Vagina (tissue), 2 donors: ENCODE measurements at regions of chr6 and their contacts with region 1.

Region 1: DNA sequence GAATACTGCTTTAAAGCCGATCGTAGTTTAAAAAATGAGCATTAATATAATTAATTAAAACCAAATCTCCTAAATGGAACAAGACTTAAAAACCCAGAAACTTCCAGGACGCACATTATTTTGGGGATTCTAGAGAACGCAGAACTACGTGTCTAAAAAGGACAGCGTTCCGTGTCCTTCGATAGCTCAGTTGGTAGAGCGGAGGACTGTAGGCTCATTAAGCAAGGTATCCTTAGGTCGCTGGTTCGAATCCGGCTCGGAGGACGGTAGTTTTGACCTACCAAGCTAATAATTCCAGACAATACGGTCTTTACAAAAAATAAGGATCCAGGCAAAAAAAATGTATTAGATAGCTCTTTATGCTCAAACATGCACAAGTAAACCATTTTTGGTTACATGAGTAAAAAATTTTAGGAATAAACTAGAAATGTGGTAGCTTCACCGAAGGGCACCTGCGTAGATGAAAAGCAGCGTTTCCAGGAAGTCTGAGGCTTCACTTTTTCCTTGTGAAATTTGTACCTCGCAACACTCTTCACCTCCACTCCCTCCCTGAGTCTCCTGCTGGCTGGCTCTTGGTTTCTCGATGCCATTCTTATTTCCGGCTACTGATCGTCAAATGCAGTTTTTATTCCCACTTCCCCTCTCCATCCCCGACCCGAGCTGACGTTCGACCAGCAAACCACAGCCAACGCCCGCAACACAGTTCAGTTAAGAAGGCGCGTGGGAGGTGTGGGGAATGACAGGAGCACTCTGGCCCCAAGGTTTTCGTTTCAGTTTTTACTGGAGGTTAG is 19.6 kb upstream of the ABT1 start:
- DNase-seq: no peak
- H3K4me3 ChIP-seq: peak overlapping the region; percentile 12 to 16
- H3K27ac ChIP-seq: no peak overlapping the region
- H3K4me1 ChIP-seq: no peaks in the 10 kb centered on the region
- H3K27me3 ChIP-seq: no peaks in the 10 kb centered on the region
- CTCF ChIP-seq: no peak
- POLR2A ChIP-seq: no peak

Region 2: GRCh38 chr6:25309886-25310285 is 1267.2 kb before region 1 on chr6:
- intact Hi-C with region 1: loop called (anchors 5 kb)
- DNase-seq: no peak
- H3K4me3 ChIP-seq: no peak overlapping the region
- H3K27ac ChIP-seq: no peak overlapping the region
- H3K4me1 ChIP-seq: peaks cover 32% of the 10 kb centered on the region
- H3K27me3 ChIP-seq: no peaks in the 10 kb centered on the region
- CTCF ChIP-seq: no peak
- POLR2A ChIP-seq: no peak

Region 3: GRCh38 chr6:26196846-26197648 is 380.1 kb before region 1 on chr6:
- intact Hi-C with region 1: no loop called
- DNase-seq: no peak
- H3K4me3 ChIP-seq: peak overlapping the region; percentile 52 to 55
- H3K27ac ChIP-seq: peak overlapping the region; percentile 68
- H3K4me1 ChIP-seq: peaks cover 26% of the 10 kb centered on the region
- H3K27me3 ChIP-seq: no peaks in the 10 kb centered on the region
- CTCF ChIP-seq: no peak
- POLR2A ChIP-seq: peak in 1 of 2 donors; percentile 75